ENCODE measurements at regions of chr18 and their contacts with region 1.

Region 1: DNA sequence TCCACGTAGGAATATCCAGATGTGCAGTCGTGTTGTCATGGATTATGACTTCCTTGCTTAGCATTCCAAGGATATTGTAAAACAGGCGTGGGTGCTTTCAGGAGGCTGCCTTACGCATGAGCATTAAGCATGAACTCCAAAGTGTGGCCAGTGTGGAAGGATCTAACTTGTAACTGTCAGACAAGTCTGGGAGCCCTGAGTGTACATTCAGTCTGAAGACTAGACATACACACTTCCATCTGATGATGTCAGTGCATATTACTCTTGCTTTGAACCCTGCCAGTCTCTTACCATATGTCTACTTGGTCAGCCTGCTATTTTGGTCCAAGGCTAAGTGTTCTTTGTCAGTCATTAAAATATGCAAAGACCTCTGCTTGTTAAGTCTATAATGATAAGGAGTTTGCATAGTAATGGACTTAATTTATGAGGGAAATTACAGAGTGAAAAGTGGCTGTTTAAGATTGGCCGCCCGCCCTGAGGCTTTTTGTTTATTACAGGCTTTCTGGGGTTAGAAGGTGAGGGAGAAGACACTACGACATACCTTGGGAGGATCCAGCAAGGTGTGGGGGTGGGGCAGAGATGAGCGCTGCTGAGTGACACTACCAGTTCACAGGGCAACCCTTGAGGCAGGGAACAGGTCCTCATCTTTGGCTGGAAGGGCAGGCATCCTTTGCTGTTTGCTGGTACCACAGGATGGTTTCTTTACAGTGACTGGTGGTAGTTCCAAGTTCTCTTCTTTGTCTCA is 48.3 kb downstream of the CABLES1 start:
- DNase-seq: peak; percentile 95
- ATAC-seq: peak; percentile 76
- H3K4me3 ChIP-seq: no peak overlapping the region
- H3K27ac ChIP-seq: peak overlapping the region; percentile 41; the same call in 1 of the 2 replicates
- H3K4me1 ChIP-seq: peaks cover 19% of the 10 kb centered on the region
- H3K27me3 ChIP-seq: no peaks in the 10 kb centered on the region
- CTCF ChIP-seq: no peak
- POLR2A ChIP-seq: no peak
- RAD21 ChIP-seq: no peak; the same call in 1 of the 2 replicates

Region 2: GRCh38 chr18:22831441-22831904 is 352.1 kb before region 1 on chr18:
- CTCF ChIA-PET with region 1: no interaction called
- POLR2A ChIA-PET with region 1: no interaction called
- dilution Hi-C with region 1: no loop called
- in situ Hi-C with region 1: no loop called
- intact Hi-C with region 1: no loop called
- DNase-seq: peak; percentile 91
- ATAC-seq: peak; percentile 85
- H3K4me3 ChIP-seq: no peak overlapping the region
- H3K27ac ChIP-seq: no peak overlapping the region; the same call in 1 of the 2 replicates
- H3K4me1 ChIP-seq: peaks cover 6% of the 10 kb centered on the region
- H3K27me3 ChIP-seq: no peaks in the 10 kb centered on the region
- CTCF ChIP-seq: no peak
- POLR2A ChIP-seq: no peak
- RAD21 ChIP-seq: 0 out of 2 replicates have a peak, but pooled peaks have one; percentile 7

Region 3: DNA sequence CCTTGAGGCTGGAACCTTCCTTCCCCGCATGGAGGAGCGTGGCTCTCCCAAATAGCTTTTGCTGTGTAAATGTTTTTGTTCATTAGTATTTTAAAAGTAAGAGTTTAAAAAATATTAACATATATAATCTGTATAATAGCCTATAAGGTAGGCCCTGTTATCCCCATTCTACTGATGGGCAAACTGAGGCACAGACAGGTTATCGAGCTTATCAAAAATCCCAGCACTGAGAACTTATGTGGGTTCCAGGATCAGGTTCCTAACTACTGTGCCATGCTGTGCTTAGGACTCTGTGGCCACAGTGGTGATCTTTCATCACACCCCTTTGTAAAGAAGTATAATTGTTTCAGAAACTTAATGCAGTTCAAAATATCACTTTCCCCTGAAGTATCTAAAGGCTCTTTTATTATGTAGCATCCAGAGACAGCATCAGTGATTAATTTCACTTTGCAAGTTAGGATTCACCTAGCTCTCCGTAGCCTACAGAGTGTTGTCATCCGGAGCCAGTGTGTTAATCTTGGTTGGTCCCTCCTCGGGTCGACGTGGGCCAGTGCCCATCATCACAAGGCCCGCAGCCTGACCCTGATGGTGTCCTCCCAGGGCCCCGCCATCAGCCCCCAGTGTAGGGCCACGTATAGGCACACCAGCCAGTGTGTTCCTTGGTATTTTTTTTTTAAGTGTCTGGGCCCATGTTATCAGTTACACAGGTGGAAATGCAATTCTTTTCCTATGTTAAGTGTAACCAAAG is 19.6 kb before region 1 on chr18:
- CTCF ChIA-PET with region 1: no interaction called
- POLR2A ChIA-PET with region 1: no interaction called
- dilution Hi-C with region 1: no loop called
- in situ Hi-C with region 1: no loop called
- intact Hi-C with region 1: loop called (anchors 1 kb)
- DNase-seq: no peak
- ATAC-seq: no peak
- H3K4me3 ChIP-seq: no peak overlapping the region
- H3K27ac ChIP-seq: no peak overlapping the region
- H3K4me1 ChIP-seq: peaks cover 3% of the 10 kb centered on the region
- H3K27me3 ChIP-seq: no peaks in the 10 kb centered on the region
- CTCF ChIP-seq: no peak
- POLR2A ChIP-seq: no peak
- RAD21 ChIP-seq: no peak

Region 4: DNA sequence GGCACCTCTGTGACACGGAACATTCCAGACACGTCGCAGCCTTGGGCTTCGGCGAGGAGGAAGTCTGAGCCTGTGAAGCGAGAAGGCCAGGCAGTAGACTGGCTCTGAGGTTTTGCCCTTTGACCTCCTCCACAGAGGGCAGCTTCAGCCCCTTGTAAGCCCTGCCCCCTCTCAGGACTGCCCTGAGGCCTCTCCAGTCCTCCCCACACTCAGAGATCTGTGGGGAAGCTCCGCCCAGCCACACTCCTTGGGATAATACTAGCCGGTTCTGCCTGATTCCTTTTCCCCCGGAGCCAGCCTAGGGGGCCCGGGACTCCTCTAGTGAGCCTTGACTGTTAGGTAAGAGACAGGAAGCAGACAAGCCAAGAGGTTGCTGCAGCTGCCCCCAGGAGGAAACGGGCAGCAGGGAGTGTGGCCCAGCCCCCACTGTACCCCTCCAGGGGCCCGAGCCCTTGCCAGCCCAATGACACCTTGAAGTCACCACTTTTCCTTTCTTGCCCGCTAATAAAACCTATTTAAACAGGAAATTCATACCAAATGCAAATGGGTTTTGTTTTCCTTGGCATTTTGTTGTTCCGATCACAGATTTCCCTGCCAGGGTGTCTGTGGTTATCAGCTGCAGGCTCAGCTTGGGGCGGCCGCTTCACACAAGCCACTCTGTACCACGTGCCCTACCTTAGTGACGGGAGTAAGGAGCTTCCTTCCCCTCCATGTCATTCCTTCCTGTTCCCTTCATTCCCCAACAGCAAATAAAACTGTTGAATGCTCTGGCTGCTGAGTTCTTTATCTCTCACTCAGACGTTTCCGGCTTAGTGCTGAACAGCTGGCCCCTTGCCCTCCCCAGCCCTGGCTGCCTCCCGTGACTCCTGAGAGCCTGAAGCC is 76.4 kb after region 1 on chr18:
- CTCF ChIA-PET with region 1: no interaction called
- POLR2A ChIA-PET with region 1: no interaction called
- dilution Hi-C with region 1: no loop called
- in situ Hi-C with region 1: no loop called
- intact Hi-C with region 1: loop called (anchors 10 kb)
- DNase-seq: peak; percentile 82
- ATAC-seq: peak; percentile 75
- H3K4me3 ChIP-seq: no peak overlapping the region
- H3K27ac ChIP-seq: peak overlapping the region; percentile 83
- H3K4me1 ChIP-seq: peaks cover 29% of the 10 kb centered on the region
- H3K27me3 ChIP-seq: no peaks in the 10 kb centered on the region
- CTCF ChIP-seq: no peak
- POLR2A ChIP-seq: no peak
- RAD21 ChIP-seq: no peak

Region 5: DNA sequence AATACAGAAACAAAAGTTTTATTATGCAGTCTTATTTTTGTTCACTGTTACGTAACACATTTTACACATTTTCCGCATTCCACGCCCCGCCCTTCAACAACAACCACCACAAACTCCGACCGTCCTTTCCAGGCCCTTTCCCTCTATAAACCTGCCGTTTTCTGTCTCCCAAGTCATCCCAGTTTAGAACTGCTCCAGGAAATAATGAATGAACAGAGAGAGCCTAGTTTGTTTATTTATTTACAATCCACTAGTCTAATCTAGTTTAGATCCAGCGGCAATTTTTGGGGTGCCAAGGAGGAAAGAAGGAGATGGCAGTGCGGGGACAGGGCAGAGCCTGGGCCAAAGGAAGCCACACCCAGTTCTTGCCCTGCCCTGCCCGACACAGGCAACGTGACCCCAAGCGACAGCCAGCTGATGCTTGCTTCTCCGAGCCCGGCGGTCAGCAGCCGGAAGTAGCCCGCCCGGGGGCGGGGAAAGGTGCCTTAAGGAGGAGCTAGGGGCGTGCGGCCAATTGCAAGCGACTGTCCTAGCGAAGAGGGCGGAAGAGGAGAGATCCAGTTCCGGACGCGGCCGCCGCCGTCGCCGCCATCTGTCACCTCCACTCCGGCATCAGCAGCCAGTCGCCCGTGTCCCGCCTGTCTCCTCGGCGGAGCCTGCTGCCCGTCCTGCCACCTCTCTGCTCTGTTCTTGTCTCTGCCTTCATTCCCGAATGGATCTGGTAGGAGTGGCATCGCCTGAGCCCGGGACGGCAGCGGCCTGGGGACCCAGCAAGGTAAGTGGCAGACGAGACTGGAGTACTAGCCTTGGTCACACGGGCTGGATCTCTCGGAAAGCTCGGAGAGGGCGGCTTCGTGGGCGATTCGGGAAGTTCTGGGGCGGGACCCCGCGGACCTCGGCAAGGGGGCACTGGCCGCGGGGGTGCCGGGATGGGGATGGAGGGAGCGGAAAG is 269.4 kb after region 1 on chr18 and contains the start of gene RIOK3:
- CTCF ChIA-PET with region 1: no interaction called
- POLR2A ChIA-PET with region 1: no interaction called
- dilution Hi-C with region 1: no loop called
- in situ Hi-C with region 1: no loop called
- intact Hi-C with region 1: no loop called
- DNase-seq: peak; percentile 92
- ATAC-seq: peak; percentile 98
- H3K4me3 ChIP-seq: peak within 1 kb of the TSS; percentile 91
- H3K27ac ChIP-seq: peak within 1 kb of the TSS; percentile 97
- H3K4me1 ChIP-seq: no peaks in the 10 kb centered on the region; the same call in none of the 2 replicates
- H3K27me3 ChIP-seq: no peaks in the 10 kb centered on the region
- CTCF ChIP-seq: no peak
- POLR2A ChIP-seq: peak; percentile 78
- RAD21 ChIP-seq: no peak
- total RNA-seq, gene RIOK3: 38.9 and 61.4 TPM in 2 replicates

Measured in IMR-90 (cell line).